Astrocyte of the cerebellum (primary cell): ENCODE measurements at regions of chr1 and their contacts with region 1.

Region 1: DNA sequence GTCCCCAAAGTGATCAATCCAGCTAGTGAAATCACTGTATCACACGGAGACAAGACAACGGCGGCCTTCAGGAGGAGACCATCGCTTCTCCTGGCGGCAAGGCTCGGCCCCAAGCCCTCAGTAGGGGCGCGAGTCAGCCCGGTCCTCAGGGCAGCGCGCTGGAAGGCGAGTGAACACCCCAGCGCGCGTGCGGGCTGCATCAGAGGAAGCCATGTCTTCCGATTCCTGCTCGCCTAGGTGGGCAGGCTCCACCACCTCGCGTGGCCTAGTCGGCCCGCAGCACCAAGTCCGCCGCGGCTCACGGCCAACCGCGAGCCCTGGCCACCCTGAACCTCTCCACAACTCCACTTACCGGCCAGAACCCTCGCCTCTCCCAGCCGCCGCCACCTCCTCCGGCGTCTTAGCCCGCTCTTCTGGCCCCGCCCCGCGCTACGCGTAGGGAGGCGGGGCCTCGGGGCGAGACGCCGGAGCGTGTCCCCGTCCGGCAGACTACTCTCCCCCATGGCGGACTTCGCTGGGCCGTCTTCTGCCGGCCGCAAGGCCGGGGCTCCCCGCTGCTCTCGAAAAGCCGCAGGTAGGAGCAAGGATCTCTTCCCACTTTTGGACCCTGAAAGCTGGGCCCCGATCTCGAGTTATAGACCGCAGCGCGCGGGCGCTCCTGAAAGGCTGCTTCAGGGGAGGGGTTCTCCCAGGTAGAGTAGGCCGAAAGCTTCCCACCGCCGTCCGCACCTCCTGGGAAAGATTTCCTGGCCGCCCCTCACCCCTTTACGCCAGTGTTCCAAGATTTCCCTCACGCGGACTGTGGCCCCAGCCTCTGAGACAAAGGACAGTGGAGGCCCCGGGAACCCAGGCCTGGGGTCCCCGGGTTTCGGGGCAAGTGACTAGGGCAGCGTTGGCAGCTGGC is at the starts of genes GLMN and RPAP2:
- DNase-seq: peak; percentile 49
- H3K4me3 ChIP-seq: peak within 1 kb of the TSS; percentile 63
- CTCF ChIP-seq: peak; percentile 28

Region 2: DNA sequence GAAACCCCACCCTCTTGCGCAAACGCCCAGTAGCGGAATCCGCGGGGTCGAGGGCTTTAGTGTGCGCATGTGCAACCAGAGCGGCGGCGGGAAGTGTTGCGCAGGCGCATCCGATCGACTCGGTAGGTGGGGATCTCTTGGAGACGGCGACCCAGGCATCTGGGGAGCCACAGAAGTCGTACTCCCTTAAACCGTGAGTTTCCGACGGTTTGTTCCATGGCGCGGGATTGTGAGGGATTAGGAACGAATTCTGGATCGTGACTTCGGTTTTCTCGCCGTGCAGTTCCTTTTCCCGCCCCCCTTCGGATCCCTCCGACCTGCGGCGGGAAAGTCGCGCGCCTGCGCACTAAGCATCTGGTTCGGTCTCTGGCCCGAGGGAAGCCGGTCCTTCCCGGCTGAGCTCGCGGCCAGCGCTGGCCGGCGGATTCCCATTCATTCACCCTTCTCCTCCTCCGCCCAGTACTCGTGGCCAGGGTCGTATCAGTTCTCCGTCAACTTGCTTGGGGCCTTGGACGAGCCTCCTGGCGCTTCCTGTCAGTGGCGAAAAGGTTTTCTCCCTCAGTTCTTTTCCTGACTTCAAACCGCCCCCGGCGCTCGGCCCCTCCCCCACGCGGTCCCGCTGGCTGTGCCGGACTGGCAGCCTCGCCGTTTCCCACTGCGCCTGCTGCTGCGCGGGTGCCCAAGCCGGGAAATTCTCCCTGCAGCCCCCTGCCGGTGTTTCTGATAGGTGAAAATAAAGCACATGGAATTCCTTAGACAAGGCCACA is 797.9 kb before region 1 on chr1 and contains the start of gene CDC7:
- in situ Hi-C with region 1: loop called (anchors 25 kb)
- DNase-seq: peak; percentile 87
- H3K4me3 ChIP-seq: peak within 1 kb of the TSS; percentile 75
- CTCF ChIP-seq: peak; percentile 49

Region 3: DNA sequence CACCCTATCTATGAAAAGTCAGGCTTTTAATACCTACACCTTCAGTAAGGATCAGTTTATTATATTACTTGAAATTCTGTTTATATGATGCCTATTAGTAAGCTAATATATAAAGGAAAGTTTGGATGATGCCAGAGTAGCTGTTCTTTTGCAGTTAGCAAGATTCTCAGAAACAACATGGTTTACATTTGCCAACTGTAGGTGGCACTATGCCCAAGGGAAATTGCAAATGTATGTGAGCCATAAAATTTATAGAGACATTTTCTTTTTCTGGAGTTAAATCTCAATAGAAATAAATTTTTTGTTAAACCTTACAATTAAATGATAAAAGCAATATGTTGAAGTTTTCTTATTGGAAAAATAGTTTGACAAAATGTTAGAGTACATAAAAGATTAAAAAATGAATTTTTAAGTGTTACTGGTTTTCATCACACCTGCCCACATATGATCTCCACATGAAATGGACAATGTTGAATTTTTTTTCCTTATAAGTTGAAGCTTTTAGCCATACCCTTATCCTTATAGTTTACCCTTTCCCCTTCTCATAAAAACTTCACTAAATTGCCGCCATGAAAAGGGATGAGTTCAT is 301.1 kb before region 1 on chr1:
- in situ Hi-C with region 1: loop called (anchors 25 kb)
- DNase-seq: peak; percentile 64
- H3K4me3 ChIP-seq: no peak overlapping the region
- CTCF ChIP-seq: peak; percentile 53

Region 4: DNA sequence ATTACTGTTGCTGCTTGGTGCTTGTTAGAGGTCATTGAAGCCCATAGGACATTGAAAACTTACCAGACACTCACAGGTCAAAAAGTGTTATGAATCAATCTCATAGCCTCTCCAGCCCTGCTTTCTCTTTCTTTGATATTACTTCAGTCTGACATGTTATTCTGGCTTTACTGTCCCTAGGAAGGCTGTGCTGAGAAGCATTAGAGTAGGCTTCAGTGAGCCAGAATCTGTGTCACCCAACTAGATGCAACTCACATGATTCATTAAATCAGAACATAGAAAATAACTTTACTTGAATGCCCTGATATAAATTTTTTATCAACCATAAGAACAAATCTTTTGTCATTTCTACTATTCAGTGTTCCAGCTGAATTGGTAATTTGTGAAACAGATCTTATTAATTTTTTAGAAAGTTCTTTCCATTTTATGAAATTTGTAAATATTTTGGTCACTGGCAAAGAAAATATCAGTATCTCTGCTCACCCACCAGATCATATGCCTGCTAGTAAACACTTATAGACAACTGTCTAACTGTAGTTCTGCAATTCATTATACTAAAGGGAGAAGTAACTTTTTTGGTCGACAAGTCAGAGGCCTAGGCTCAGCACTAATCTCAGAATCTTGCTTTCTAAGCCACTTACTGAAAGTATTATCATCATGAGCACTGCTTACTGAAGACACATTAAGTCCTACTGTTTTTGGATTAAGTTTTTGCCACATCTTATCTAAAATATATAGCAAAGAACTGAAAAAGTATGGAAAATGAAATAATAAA is 48.2 kb after region 1 on chr1:
- in situ Hi-C with region 1: no loop called
- DNase-seq: no peak
- H3K4me3 ChIP-seq: no peak overlapping the region
- CTCF ChIP-seq: no peak

Region 5: DNA sequence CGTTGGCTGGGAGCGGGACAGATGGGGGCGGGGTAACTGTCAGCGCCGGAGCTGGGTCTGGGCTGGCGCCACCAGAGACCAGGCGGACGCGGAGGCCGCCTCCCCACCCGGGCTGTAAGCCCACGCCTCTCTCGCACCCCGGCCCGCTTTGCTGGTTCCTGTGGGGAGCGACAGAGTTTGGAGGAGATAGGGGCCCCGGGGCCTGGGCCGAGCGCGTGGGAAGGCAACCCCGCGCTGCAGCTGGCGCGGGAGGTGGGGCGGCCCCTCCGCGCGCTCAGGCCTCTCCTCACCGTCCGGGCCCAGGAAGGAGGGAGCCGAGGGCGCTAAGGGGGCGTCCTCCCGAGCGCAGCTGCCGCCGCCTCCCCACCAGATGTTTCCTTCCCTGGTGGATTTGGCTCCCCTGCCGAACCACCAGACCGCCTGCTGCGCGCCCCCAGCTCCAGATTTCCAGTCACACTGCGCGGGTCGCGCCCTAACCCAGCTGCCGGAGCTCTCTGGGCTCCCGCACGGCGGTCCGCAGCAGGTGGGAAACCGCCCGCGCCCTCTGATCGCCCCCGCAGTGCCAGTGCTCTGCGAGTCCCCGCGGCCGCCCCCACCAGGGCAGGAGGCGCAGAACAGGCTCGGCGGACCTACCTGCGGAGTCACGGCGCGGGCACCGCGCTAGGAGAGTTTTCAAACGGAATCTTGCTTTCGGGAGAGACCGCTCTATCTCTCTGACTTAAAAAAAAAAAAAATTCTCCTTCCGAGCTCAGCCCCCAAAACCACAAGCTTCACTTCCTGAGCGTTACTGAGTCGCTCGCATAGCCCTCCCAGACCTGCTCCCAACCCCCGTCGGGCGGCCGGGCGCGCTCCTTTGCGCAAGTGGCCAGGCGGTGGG is 186.8 kb after region 1 on chr1:
- in situ Hi-C with region 1: no loop called
- DNase-seq: no peak
- H3K4me3 ChIP-seq: peak overlapping the region; percentile 50
- CTCF ChIP-seq: peak; percentile 32